ENCODE measurements at regions of chr10 and their contacts with region 1.

Region 1: DNA sequence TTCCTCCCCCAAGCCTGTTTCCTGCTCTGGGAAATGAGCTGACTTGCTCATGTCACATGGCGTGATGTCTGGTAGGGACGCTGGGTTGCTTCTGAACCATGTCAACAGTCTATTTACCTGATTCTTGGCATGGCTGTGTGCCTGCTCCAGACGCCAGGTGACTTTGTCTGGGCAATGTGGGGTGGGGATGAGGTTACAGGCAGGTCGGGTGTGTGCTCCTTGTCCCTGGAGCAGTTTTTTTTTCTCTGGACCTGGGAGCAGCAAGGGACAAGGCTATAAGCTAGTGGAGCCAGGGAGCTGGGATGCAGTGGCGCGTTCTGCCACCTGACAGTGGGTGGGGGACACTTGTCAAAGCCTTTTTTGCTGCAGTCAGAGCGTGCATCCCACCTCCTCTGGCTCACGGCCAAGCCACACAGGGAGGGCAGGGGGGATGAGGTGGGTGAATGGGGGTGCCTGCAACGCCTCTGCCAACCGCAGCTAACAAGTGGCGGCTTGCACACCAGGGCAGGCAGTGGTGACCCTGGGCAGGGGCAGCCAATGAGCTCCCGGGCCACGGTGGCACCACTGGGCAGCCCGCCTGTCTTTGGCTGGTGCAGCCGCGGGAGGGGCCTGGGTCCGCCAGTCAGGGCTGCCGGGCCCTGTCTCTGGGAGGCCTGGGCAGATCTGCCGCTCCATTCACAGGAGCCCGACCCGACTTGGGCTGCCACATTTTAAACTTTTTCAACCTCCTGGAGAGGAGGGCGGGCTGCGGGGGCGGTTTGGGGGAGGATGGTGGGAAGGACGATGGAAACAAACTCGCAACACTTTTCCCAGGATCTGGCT is 22.9 kb downstream of the DNAJB12 start:
- DNase-seq: peak; percentile 88 to 92
- H3K4me3 ChIP-seq: peak overlapping the region in 2 of 3 donors; percentile 7 to 25
- H3K27ac ChIP-seq: peak overlapping the region; percentile 95 to 97
- H3K4me1 ChIP-seq: peaks cover 25 to 53% of the 10 kb centered on the region in 2 donors
- H3K27me3 ChIP-seq: no peaks in the 10 kb centered on the region
- CTCF ChIP-seq: peak in 2 of 3 donors; percentile 53 to 62
- POLR2A ChIP-seq: no peak

Region 2: GRCh38 chr10:72058989-72059842 is 272.6 kb before region 1 on chr10:
- intact Hi-C with region 1: loop called (anchors 10 kb)
- DNase-seq: no peak
- H3K4me3 ChIP-seq: no peak overlapping the region
- H3K27ac ChIP-seq: no peak overlapping the region
- H3K4me1 ChIP-seq: no peaks in the 10 kb centered on the region
- H3K27me3 ChIP-seq: no peaks in the 10 kb centered on the region
- CTCF ChIP-seq: no peak
- POLR2A ChIP-seq: no peak